ENCODE measurements at regions of chr2 and their contacts with region 1.

Region 1: GRCh38 chr2:186695081-186695756 is 1.4 kb downstream of the FAM171B start:
- DNase-seq: no peak
- H3K4me3 ChIP-seq: peak overlapping the region; percentile 32 to 86 (median 84); a peak in 7 of 8 replicates
- H3K27ac ChIP-seq: no peak overlapping the region
- H3K4me1 ChIP-seq: peaks cover 0 to 3% (median 1%) of the 10 kb centered on the region in 4 experiments; a peak in 3 of 7 replicates
- H3K27me3 ChIP-seq: no peaks in the 10 kb centered on the region
- CTCF ChIP-seq: no peak
- EP300 ChIP-seq: no peak
- POLR2A ChIP-seq: no peak
- RAD21 ChIP-seq: no peak

Region 2: DNA sequence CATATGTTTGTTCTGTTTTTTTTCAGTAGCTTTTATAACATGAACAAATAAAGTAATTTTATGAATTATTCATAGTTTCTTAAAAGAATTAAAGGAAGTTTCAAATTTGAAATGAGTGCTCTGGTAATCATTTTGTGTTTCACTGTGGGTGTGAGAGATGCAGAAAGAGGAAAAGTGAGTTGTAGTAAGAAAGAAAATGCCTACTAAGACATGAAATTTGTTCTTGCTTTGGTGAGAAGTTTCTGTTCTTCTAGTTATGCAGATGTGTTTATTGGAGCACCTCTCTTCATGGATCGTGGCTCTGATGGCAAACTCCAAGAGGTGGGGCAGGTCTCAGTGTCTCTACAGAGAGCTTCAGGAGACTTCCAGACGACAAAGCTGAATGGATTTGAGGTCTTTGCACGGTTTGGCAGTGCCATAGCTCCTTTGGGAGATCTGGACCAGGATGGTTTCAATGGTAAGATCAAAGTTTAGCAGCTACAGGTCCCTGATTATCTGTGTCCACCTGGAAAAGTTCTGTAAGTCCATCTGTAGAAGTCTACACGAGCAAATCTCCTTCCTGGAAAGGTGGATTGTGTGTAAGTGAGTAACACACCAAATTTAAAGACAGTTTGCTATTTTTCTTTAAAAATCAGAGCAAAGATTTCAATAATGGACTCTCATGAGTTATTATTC is 54.0 kb before region 1 on chr2:
- CTCF ChIA-PET with region 1: no interaction called
- POLR2A ChIA-PET with region 1: no interaction called
- DNase-seq: no peak
- H3K4me3 ChIP-seq: no peak overlapping the region
- H3K27ac ChIP-seq: no peak overlapping the region
- H3K4me1 ChIP-seq: no peaks in the 10 kb centered on the region
- H3K27me3 ChIP-seq: no peaks in the 10 kb centered on the region
- CTCF ChIP-seq: no peak
- EP300 ChIP-seq: no peak
- POLR2A ChIP-seq: no peak
- RAD21 ChIP-seq: no peak

Region 3: DNA sequence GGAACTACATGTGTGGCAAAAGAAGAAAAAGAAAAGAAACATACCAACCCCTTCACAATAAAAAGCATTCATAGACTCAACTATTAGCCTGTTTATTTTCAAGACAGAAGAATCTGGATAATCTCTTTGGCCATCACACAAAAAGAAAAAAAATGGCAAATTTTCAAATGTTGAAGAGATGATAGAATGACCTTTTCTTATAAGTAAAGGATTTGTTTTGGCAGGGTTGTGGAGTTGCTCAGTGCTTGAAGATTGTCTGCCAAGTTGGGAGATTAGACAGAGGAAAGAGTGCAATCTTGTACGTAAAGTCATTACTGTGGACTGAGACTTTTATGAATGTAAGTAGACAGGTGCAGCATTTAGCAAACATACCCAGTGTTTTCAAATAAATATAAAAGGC is 19.8 kb before region 1 on chr2:
- CTCF ChIA-PET with region 1: no interaction called
- POLR2A ChIA-PET with region 1: no interaction called
- DNase-seq: no peak
- H3K4me3 ChIP-seq: no peak overlapping the region
- H3K27ac ChIP-seq: no peak overlapping the region
- H3K4me1 ChIP-seq: no peaks in the 10 kb centered on the region
- H3K27me3 ChIP-seq: no peaks in the 10 kb centered on the region
- CTCF ChIP-seq: no peak
- EP300 ChIP-seq: no peak
- POLR2A ChIP-seq: no peak
- RAD21 ChIP-seq: no peak

Region 4: DNA sequence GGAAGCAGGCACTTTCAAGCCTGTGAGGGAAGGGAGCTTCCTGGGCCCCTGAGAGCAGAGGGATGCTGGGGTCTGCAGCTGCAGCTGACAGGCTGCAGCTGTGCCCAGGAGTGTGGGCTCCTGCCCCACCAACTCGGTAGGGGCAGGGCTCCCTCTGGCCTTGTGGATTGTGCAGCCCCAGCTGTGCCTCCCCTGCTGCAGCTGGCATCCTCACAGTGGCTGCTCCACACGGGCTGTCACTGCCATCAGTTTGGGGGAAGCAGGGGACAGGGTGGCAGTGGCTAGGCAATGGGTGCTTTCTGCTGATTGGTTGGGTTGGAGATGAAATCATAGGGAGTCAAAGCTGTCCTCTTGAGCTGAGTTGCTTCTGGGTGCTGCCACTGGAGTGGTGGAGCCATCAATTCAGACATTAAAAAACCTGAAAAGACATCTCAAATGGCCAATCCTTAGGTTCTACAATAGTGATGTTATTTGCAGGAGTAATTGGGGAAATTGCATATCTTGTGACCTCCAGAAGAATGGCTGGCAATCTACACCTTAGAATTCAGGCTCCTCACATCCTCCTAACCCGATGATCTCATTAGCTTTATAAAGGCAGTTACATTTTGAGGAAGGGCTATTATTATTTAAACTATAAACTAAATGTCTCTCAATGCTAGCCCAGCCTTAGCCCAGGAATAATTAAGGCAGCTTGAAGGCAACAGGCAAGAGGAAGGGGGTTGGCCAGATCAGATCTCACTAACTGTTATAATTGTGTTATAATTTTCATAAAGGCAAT is 39.9 kb after region 1 on chr2:
- CTCF ChIA-PET with region 1: no interaction called
- POLR2A ChIA-PET with region 1: no interaction called
- DNase-seq: peak; percentile 21 to 52
- H3K4me3 ChIP-seq: peak overlapping the region in 1 of 4 experiments; percentile 17; a peak in 1 of 8 replicates
- H3K27ac ChIP-seq: peak overlapping the region; percentile 67; the same call in 1 of the 2 replicates
- H3K4me1 ChIP-seq: peaks cover 0 to 12% (median 8%) of the 10 kb centered on the region in 4 experiments; a peak in 6 of 7 replicates
- H3K27me3 ChIP-seq: no peaks in the 10 kb centered on the region
- CTCF ChIP-seq: no peak
- EP300 ChIP-seq: no peak
- POLR2A ChIP-seq: no peak
- RAD21 ChIP-seq: no peak

Region 5: DNA sequence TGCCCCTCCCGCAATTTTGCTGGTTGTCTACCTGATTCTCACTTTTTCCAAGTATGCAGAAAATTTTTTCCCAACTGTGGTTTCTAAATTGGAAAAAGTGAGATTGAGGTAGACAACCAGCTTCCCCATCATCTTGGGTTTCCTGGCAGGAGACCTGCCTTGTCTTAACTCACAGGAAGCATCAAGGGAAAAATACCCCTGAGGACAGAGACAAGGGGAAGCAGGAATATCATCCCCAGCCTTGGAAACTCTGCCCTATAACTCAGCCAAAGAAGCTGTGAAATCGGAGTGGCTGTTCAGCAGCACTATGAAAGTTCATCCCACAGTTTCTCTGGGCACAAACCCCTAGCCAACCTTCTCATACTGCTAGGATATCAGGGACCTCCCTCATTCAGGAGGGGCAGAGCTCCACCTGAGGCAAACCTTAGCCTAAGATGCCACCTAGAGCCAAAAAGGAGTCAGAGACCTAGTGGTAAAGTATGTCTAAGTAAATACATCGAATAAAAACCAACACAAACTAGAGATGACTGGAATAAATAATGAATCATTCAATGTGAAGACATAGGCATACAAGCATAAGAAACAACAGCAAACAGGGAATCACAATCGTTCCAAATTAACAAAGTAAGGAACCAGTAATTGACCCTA is 85.6 kb after region 1 on chr2:
- CTCF ChIA-PET with region 1: interaction called, 31 read pairs
- POLR2A ChIA-PET with region 1: interaction called, 7 read pairs
- DNase-seq: peak in 1 of 2 experiments; percentile 43
- H3K4me3 ChIP-seq: no peak overlapping the region
- H3K27ac ChIP-seq: no peak overlapping the region
- H3K4me1 ChIP-seq: no peaks in the 10 kb centered on the region
- H3K27me3 ChIP-seq: no peaks in the 10 kb centered on the region
- CTCF ChIP-seq: peak; percentile 26 to 85 (median 81)
- EP300 ChIP-seq: no peak
- POLR2A ChIP-seq: no peak
- RAD21 ChIP-seq: peak; percentile 99

Region 6: DNA sequence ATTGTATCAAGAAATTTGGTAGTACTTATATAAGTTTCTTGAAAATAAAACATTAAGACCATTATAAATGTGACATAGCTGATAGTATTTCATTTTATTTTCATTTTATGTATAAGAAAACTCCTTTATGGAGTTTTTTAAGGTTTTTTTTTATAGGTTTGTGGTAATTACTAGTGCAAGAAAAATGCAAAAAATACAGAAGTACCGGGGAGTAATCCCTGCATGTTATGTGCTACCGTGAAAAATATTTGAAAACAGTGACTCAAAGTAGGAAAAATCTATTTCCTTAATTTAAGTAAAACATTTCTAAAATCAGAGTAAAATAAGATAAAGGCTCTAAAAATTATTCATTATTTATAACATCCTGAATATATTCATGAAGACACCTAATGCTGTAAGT is 132.2 kb after region 1 on chr2:
- CTCF ChIA-PET with region 1: no interaction called
- POLR2A ChIA-PET with region 1: no interaction called
- DNase-seq: no peak
- H3K4me3 ChIP-seq: no peak overlapping the region
- H3K27ac ChIP-seq: no peak overlapping the region
- H3K4me1 ChIP-seq: no peaks in the 10 kb centered on the region
- H3K27me3 ChIP-seq: no peaks in the 10 kb centered on the region
- CTCF ChIP-seq: no peak
- EP300 ChIP-seq: no peak
- POLR2A ChIP-seq: no peak
- RAD21 ChIP-seq: no peak